Heart left ventricle (tissue), 16 donors: ENCODE measurements at regions of chr2 and their contacts with region 1.

Region 1: DNA sequence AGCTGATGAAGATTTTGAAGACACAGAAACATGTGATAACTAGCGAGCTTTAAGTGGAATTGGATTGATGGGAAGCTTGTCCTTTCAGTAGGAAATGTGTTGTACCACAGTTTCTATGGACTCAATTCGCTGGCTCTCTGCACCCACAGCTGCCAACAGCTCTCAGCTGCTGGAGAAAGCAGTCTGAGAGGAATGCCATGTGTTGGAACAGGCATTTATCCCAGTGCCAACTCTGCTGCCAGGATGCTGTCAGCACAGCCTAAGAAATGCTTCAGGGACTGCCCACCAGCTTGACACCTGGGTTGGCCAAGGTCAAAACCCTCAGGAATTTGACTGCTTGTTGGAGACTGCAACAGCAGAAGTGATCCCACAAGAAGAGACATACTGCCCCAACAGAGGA is 193.0 kb upstream of the THSD7B start:
- DNase-seq: peak; percentile 67 to 89 (median 69)
- ATAC-seq: peak; percentile 98 to 100 (median 100)
- H3K4me3 ChIP-seq: no peak overlapping the region
- H3K27ac ChIP-seq: peak overlapping the region in 3 of 12 donors; percentile 20 to 63 (median 61)
- H3K4me1 ChIP-seq: peaks cover 0 to 12% (median 2%) of the 10 kb centered on the region in 12 donors
- H3K27me3 ChIP-seq: no peaks in the 10 kb centered on the region
- CTCF ChIP-seq: no peak
- POLR2A ChIP-seq: no peak

Region 2: GRCh38 chr2:136448432-136448831 is 123.9 kb before region 1 on chr2:
- intact Hi-C with region 1: no loop called
- DNase-seq: no peak
- ATAC-seq: no peak
- H3K4me3 ChIP-seq: no peak overlapping the region
- H3K27ac ChIP-seq: no peak overlapping the region
- H3K4me1 ChIP-seq: no peaks in the 10 kb centered on the region
- H3K27me3 ChIP-seq: peaks cover 0 to 22% (median 0%) of the 10 kb centered on the region in 9 donors
- CTCF ChIP-seq: no peak
- POLR2A ChIP-seq: no peak

Region 3: DNA sequence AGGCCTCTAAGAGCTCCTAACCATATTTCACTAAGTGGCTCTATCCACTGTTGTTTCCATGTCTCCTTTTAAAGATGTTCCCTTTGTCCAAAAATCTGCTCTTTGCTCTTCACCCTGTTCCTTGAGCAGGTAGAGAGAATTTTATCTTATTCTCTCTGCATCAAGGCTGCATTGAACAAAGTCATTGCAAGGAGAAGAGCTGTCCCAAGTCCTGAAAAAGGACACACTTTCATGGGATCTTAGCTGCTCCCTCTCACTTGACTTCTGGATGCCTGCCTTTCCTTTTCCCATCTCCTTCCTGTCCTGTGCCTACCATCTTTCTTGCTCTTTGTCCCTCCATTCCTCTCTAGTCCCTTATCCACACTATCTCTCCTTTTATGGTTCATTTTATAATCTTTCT is 42.2 kb before region 1 on chr2:
- intact Hi-C with region 1: loop called in 2 of 10 experiments (anchors 5 kb)
- DNase-seq: no peak
- ATAC-seq: no peak
- H3K4me3 ChIP-seq: no peak overlapping the region
- H3K27ac ChIP-seq: no peak overlapping the region
- H3K4me1 ChIP-seq: peaks cover 0 to 5% (median 0%) of the 10 kb centered on the region in 12 donors
- H3K27me3 ChIP-seq: no peaks in the 10 kb centered on the region
- CTCF ChIP-seq: no peak
- POLR2A ChIP-seq: no peak

Region 4: DNA sequence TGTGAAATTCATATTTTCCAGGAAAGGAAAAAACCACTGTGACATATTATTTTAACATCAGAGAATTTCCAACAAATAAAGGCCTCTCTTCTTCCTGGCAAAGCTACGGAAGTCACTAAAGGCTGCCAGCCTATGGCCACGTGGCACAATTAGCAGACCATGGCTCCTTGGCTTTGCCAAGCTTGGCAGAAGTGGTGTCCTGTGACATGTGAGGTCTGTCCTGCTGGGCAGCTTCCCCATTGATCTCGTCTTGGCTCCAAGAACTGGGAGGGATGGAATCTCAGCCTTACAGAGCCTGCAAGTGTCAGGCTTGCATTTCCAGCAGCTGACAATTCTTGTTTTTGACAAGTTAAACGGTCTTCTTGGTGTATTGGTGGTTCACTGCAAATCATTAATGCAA is 33.8 kb before region 1 on chr2:
- intact Hi-C with region 1: loop called in 2 of 10 experiments (anchors 5 kb)
- DNase-seq: peak in 4 of 5 donors; percentile 20 to 70 (median 44)
- ATAC-seq: peak; percentile 76 to 87 (median 78)
- H3K4me3 ChIP-seq: no peak overlapping the region
- H3K27ac ChIP-seq: no peak overlapping the region
- H3K4me1 ChIP-seq: peaks cover 0 to 5% (median 0%) of the 10 kb centered on the region in 12 donors
- H3K27me3 ChIP-seq: no peaks in the 10 kb centered on the region
- CTCF ChIP-seq: no peak
- POLR2A ChIP-seq: no peak